ENCODE measurements at regions of chr5 and their contacts with region 1.

Region 1: GRCh38 chr5:57259704-57260103 is 85.8 kb downstream of the GPBP1 start:
- DNase-seq: no peak
- H3K4me3 ChIP-seq: no peak overlapping the region
- H3K27ac ChIP-seq: no peak overlapping the region
- H3K4me1 ChIP-seq: no peaks in the 10 kb centered on the region
- H3K27me3 ChIP-seq: no peaks in the 10 kb centered on the region
- CTCF ChIP-seq: no peak

Region 2: DNA sequence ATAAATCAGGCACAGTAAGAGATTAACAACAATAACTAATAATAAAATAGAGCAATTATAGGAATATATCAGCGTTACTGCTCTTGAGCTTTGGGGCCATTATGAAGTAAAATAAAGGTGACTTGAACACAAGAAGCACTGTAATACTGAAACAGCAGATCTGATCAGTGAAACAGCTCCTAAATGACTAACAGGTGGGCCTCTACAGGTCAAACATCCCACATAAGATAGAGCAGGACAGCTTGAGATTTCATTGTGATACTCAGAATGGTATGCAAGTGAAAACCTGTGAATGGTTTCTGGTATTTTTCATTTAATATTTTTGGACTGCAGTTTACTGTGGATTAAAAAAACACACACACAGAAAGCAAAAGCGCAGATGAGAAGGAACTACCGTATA is 468.3 kb before region 1 on chr5:
- CTCF ChIA-PET with region 1: no interaction called
- dilution Hi-C with region 1: no loop called
- in situ Hi-C with region 1: no loop called
- intact Hi-C with region 1: no loop called
- DNase-seq: no peak
- H3K4me3 ChIP-seq: no peak overlapping the region
- H3K27ac ChIP-seq: no peak overlapping the region
- H3K4me1 ChIP-seq: no peaks in the 10 kb centered on the region
- H3K27me3 ChIP-seq: no peaks in the 10 kb centered on the region
- CTCF ChIP-seq: no peak

Region 3: GRCh38 chr5:57163553-57164006 is 96.1 kb before region 1 on chr5:
- CTCF ChIA-PET with region 1: no interaction called
- dilution Hi-C with region 1: loop called (anchors 5 kb)
- in situ Hi-C with region 1: no loop called
- intact Hi-C with region 1: no loop called
- DNase-seq: no peak
- H3K4me3 ChIP-seq: no peak overlapping the region
- H3K27ac ChIP-seq: no peak overlapping the region
- H3K4me1 ChIP-seq: no peaks in the 10 kb centered on the region
- H3K27me3 ChIP-seq: no peaks in the 10 kb centered on the region
- CTCF ChIP-seq: no peak

Region 4: DNA sequence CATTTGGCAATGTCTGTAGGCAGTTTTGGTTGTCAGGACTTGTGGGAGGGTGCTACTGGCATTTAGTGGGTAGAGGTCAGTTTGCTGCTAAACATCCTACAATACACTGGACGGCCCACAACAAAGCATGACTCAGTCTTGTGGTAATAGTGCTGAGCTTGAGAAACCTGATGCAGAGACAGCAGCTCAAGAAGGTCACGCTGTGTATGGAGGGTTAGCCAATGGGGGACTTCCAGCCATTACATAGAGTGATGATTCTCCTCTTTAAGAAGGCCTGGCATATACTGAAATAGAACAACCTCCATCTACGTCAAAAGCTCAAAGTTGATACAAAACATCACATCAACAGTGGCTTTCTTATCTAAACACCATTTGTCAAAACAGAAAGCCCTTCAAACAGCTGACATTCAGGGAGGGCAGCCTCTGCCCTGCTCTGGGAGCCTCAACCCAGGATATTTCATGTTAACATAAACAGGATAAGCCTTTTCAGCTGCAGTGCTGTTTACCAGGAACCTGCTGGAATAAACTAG is 57.2 kb after region 1 on chr5:
- CTCF ChIA-PET with region 1: no interaction called
- dilution Hi-C with region 1: loop called (anchors 10 kb)
- in situ Hi-C with region 1: no loop called
- intact Hi-C with region 1: no loop called
- DNase-seq: peak; percentile 90
- H3K4me3 ChIP-seq: no peak overlapping the region
- H3K27ac ChIP-seq: no peak overlapping the region
- H3K4me1 ChIP-seq: peaks cover 4% of the 10 kb centered on the region
- H3K27me3 ChIP-seq: no peaks in the 10 kb centered on the region
- CTCF ChIP-seq: no peak

Region 5: GRCh38 chr5:57577432-57578175 is 317.9 kb after region 1 on chr5:
- CTCF ChIA-PET with region 1: no interaction called
- dilution Hi-C with region 1: no loop called
- in situ Hi-C with region 1: no loop called
- intact Hi-C with region 1: no loop called
- DNase-seq: no peak
- H3K4me3 ChIP-seq: no peak overlapping the region
- H3K27ac ChIP-seq: no peak overlapping the region
- H3K4me1 ChIP-seq: no peaks in the 10 kb centered on the region
- H3K27me3 ChIP-seq: no peaks in the 10 kb centered on the region
- CTCF ChIP-seq: no peak

Measured in mammary epithelial cell (primary cell).